Activated CD4-positive, alpha-beta memory T cell treated with anti-CD3 and anti-CD28 coated beads, Interleukin-2, amount 10 ng/mL, durations not matched to agents 7 days and 5 days (primary cell): ENCODE measurements at regions of chr22 and their contacts with region 1.

Region 1: GRCh38 chr22:31211862-31212730 is at the start of gene LIMK2:
- DNase-seq: peak; percentile 98
- H3K4me3 Mint-ChIP-seq: peak within 1 kb of the TSS; percentile 82
- H3K27ac Mint-ChIP-seq: peak within 1 kb of the TSS; percentile 87
- H3K4me1 Mint-ChIP-seq: peaks cover 55% of the 10 kb centered on the region
- H3K27me3 Mint-ChIP-seq: no peaks in the 10 kb centered on the region
- total RNA-seq, gene LIMK2: 44.0 to 46.4 TPM

Region 2: DNA sequence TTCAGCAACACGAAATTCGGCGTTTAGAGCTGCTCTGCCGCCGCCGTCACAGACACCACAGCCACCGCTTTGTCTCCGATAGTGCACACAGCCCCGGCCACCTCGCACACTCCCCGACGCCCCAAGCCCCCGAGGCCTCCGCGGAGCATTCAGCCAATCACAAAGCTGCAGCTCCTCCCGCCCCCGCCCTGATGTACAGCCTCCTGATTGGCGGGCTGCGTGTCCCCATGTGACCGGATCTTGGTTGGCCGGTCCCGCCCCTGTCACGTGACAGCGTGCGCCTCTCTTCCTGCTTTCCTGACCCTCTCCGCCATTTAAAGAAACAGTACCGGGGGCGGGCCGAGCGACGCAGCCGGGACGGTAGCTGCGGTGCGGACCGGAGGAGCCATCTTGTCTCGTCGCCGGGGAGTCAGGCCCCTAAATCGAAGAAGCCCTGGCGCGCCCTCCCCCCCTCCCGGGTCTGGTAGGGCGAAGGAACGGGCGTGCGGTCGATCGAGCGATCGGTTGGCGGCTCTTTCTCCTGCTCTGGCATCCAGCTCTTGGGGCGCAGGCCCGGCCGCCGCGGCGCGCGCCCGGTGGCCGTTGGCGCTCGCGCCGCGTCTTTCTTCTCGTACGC is 243.1 kb before region 1 on chr22 and contains the start of gene TUG1:
- CTCF ChIA-PET with region 1: no interaction called
- POLR2A ChIA-PET with region 1: interaction called, 16 read pairs
- DNase-seq: peak; percentile 98
- H3K4me3 Mint-ChIP-seq: peak within 1 kb of the TSS; percentile 95
- H3K27ac Mint-ChIP-seq: peak within 1 kb of the TSS; percentile 94
- H3K4me1 Mint-ChIP-seq: peaks cover 65% of the 10 kb centered on the region
- H3K27me3 Mint-ChIP-seq: no peaks in the 10 kb centered on the region
- total RNA-seq, gene TUG1: 71.2 to 72.5 TPM

Region 3: GRCh38 chr22:31230871-31231621 is 18.9 kb after region 1 on chr22:
- CTCF ChIA-PET with region 1: interaction called, 110 read pairs
- POLR2A ChIA-PET with region 1: interaction called, 11 read pairs
- DNase-seq: peak; percentile 55
- H3K4me3 Mint-ChIP-seq: no peak overlapping the region
- H3K27ac Mint-ChIP-seq: peak overlapping the region; percentile 87
- H3K4me1 Mint-ChIP-seq: peaks cover 56% of the 10 kb centered on the region
- H3K27me3 Mint-ChIP-seq: no peaks in the 10 kb centered on the region

Region 4: DNA sequence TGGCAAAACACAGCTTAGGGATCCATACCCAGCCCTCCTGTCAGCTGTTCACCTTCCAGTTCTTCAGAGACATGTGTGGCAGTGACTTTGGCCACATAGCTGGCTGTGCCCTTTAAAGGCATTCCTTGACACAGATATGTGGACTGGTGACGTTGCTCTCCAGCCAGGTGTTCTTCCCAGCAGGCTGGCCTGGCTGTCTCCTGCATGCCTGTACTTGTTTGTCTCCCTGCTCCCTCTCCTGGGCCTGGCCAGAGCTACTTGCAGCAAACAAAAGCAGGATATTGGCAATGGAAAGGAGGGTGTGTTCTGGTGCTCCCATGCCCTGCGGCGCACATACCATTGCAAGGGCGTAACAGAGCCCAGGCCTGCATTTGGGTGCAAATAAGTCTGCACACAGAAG is 41.9 kb after region 1 on chr22:
- CTCF ChIA-PET with region 1: interaction called, 12 read pairs
- POLR2A ChIA-PET with region 1: interaction called, 3 read pairs
- DNase-seq: no peak
- H3K4me3 Mint-ChIP-seq: no peak overlapping the region
- H3K27ac Mint-ChIP-seq: no peak overlapping the region
- H3K4me1 Mint-ChIP-seq: peaks cover 5% of the 10 kb centered on the region
- H3K27me3 Mint-ChIP-seq: no peaks in the 10 kb centered on the region

Region 5: GRCh38 chr22:31313366-31314147 is 101.5 kb after region 1 on chr22:
- CTCF ChIA-PET with region 1: interaction called, 10 read pairs
- POLR2A ChIA-PET with region 1: interaction called, 3 read pairs
- DNase-seq: peak; percentile 69
- H3K4me3 Mint-ChIP-seq: no peak overlapping the region
- H3K27ac Mint-ChIP-seq: no peak overlapping the region
- H3K4me1 Mint-ChIP-seq: peaks cover 11% of the 10 kb centered on the region
- H3K27me3 Mint-ChIP-seq: no peaks in the 10 kb centered on the region